Activated T-helper 2 cell treated with anti-CD3 and anti-CD28 coated beads, Interferon-gamma antibody, Interleukin-2, Interleukin-4, amounts not matched to agents 10 μg/mL and 5 μg/mL and 100 μg/mL, durations not matched to agents 14 hours and 24 hours and 36 hours (primary cell): ENCODE measurements at regions of chr13 and their contacts with region 1.

Region 1: DNA sequence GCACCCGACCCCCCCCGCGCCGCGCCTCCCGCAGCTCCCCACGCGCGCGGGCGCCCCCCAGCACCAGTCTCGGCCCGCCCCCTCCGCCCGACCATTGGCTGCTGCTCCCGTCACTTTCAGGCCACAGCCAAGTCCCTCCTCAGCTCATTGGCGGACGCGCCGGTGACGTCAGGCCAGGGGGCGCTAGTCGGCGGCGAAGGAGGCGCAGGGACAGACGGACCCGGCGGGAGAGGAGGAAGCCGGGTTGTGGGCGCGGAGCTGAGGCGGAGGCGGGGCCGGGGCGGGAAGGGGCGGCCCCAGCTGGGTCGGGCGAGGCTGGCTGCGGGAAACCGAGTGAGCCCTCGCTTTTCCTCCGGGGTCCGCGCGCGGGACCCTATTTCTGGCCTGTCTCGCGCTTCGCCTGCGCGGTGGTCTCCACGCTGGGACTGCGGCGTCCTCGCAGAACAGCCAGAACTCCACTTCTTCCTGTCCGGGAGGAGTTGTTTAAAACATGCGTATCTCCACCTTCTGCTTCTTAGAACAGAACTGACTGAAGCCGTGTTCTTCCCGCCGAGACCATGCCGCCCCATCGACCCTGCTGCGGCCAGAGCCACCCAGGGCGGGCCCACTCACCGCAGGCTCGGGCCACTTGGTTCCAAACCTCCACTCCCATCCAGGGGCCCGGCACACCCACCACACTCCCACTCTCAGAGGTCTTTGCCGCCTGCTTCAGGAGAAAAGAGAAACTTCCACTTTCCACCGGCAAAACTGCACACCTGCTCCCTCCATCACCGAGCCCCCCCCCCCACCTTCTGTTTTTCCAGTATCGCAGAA is 459 bp upstream of the TMTC4 start:
- DNase-seq: peak; percentile 99
- H3K4me3 Mint-ChIP-seq: peak overlapping the region; percentile 82
- H3K27ac Mint-ChIP-seq: peak overlapping the region; percentile 48
- H3K4me1 Mint-ChIP-seq: peaks cover 18% of the 10 kb centered on the region
- H3K27me3 Mint-ChIP-seq: peaks cover 23% of the 10 kb centered on the region

Region 2: DNA sequence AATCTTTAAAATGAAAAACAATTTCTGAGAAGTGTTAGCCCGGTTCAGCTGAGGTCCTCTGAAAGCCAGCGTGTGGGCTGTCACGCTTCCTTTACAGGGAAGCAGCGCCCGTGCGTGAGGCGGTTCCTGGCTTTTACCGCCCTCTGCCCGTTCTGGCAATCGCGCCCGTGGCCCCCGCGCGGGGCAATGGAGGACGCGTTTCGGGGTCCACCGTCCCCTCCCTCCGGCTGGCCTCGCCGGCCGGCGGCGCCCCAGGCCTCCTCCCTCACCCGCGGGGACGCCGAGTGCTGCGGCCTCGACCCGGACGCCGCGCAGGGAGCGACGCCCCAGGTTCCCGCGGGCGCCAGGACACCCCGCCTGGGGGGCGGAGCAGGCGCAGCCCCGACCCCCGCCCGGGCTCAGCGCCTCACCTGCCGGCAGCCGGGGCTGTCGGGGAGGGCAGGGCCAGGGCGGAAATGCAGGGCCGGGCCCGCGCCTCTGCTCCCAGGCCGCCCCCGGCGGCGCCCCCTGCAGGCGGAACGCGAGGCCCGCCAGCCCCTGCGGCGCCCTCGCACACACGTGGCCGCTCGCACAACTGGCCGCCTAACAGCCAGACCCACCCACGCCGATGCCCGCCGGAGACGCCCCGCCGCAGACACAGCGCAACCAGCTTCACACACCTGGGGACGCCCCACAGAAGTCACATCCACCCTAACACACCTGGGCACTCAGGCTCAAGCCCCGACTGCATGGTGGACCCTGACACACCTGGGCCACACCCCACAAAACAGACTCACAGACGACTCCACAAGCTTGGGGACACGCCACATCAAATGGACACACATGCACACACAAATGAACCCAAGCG is 86.5 kb before region 1 on chr13 and contains the start of gene GGACT:
- intact Hi-C with region 1: loop called (anchors 2 kb)
- DNase-seq: peak; percentile 78
- H3K4me3 Mint-ChIP-seq: peak within 1 kb of the TSS; percentile 78
- H3K27ac Mint-ChIP-seq: peak within 1 kb of the TSS; percentile 89
- H3K4me1 Mint-ChIP-seq: peaks cover 42% of the 10 kb centered on the region
- H3K27me3 Mint-ChIP-seq: no peaks in the 10 kb centered on the region
- total RNA-seq, gene GGACT: 5.5 and 7.7 TPM in 2 replicates